Gastrocnemius medialis (tissue), 4 donors: ENCODE measurements at regions of chr11 and their contacts with region 1.

Region 1: DNA sequence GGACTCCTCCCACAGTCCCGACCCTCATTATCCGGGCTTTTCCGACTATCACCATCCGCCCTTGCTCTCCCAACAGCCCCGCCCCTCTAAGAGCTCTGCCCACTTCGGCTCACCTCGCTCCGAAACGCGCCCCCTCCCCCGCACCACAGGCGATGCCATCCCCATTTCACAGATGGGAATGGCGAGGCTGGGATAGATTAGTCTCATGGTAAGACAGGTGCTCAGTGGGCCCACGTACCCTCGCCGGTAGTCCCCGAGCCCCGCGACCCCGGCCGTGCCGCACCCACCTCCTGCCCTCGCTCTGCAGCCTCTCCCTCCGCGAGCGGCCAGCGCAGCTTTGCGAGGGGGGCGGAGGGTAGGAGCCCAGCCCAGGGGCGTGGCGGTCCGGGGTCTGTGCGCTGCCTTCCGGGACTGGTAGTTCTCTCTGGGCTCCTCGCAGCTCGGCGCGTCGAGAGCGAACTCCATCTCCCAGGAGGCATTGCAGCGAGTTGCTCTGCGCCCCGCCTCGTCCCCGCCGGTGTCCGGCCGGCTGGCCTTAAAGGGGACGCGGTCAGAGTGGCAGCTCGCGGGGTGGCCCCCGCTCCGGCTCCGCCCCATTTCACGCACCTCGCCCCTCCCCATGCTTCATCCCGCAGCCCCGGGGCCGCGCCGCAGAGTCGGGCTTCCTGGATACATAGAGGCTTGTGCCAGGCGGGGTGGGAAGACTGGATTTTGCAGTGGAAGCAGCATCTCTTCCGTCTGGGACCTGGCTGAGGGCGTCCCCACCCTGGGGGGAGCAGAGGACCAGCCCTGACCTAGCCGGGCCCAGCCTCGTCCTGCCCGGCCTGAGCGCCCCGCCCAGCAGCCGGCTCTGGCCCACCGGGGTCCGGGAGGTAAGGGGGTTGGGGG is at the starts of genes KCTD21 and USP35:
- DNase-seq: peak; percentile 96
- ATAC-seq: peak; percentile 88 to 92
- H3K4me3 ChIP-seq: peak within 1 kb of the TSS; percentile 63 to 100 (median 99)
- H3K27ac ChIP-seq: peak within 1 kb of the TSS; percentile 71 to 94 (median 86)
- H3K4me1 ChIP-seq: peaks cover 37 to 49% of the 10 kb centered on the region in 2 donors
- H3K27me3 ChIP-seq: no peaks in the 10 kb centered on the region
- CTCF ChIP-seq: no peak
- POLR2A ChIP-seq: peak; percentile 80 to 90
- total RNA-seq, gene KCTD21: 6.0 to 18.9 (median 15.8) TPM
- total RNA-seq, gene USP35: 4.6 to 6.1 (median 5.4) TPM

Region 2: GRCh38 chr11:78149646-78150045 is 38.9 kb before region 1 on chr11:
- in situ Hi-C with region 1: no loop called
- intact Hi-C with region 1: loop called (anchors 2 kb)
- DNase-seq: no peak
- ATAC-seq: peak; percentile 66 to 96
- H3K4me3 ChIP-seq: no peak overlapping the region
- H3K27ac ChIP-seq: no peak overlapping the region
- H3K4me1 ChIP-seq: peaks cover 0 to 9% of the 10 kb centered on the region in 2 donors
- H3K27me3 ChIP-seq: no peaks in the 10 kb centered on the region
- CTCF ChIP-seq: peak in 3 of 5 experiments; percentile 17 to 35 (median 26)
- POLR2A ChIP-seq: no peak